PC-9 (cell line): ENCODE measurements at regions of chr17 and their contacts with region 1.

Region 1: DNA sequence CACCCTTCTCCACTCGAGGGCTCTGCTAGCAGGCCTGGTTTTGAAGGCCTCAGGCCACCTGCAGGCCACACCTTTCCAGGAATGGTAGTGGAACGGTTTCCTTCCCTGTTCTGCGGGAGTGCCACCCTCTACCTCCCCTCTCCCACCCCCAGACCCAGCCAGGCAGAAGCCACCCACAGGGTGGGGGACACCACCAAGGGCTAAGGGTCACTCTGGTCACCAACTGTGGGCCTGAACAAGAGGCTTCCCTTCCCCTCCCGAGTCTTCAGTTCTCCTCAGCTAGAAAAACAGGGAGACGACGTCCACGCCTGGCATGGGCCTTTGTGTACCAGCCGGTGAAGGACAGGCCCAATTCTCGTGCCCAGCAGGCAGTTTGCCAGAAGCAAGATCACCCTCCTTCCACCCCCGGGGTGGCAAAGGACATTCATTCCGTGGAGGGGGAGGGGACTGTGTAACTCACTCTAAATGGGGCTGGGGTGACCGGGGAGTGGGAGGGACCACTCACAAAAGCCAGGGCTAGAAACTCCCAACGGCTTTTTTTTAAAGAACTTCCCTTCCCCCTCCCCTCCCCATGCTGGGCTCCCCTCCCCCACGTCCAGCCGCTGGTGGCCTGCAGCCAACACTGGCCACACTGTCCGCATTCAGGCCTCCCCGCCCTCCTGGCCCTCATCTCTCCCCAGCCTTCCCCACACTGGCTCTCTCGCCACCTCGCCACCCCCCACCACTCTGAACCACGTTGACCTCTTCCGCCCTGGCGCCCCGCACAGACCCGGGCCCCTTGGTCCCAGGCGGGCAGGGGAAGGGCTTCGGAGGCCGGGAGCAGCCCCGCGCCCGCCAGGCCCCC is 7.7 kb downstream of the CBX4 start:
- DNase-seq: peak in 1 of 2 experiments; percentile 79
- H3K4me3 ChIP-seq: peak overlapping the region; percentile 68
- H3K27ac ChIP-seq: peak overlapping the region; percentile 82
- H3K4me1 ChIP-seq: peaks cover 36% of the 10 kb centered on the region
- H3K27me3 ChIP-seq: no peaks in the 10 kb centered on the region
- CTCF ChIP-seq: no peak

Region 2: DNA sequence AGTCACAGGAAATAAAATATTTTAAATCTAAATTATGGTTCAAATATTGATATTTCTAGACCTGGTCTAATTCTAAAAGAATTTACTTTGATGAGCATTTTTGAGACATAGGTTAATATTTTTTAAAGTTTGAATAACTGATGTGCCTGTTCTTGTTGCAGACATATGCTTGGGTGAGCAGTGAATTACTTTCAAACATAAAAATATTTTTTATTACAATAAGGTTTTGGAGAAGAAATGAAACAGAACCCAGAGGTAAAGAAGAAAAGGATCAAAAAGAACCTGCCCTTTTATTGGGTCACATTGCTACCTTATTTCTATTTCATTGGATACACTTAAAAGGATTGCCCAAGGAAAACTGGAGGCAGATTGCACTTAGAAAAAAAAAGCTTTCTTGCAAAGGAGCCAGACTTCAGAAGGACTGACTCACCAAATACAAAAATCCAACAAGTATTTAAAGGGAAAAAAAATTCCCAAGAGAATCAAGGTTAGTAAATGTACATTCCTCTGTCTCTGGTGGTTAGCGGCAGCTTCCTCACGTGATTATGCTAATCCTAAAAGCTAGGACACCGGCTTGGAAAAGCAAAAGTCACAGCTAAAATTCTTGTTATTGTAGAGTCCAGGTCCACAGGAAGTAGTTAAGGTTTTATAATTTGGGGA is 82.3 kb before region 1 on chr17:
- CTCF ChIA-PET with region 1: no interaction called
- POLR2A ChIA-PET with region 1: no interaction called
- intact Hi-C with region 1: no loop called
- DNase-seq: no peak
- H3K4me3 ChIP-seq: no peak overlapping the region
- H3K27ac ChIP-seq: peak overlapping the region; percentile 18; the same call in 1 of the 2 replicates
- H3K4me1 ChIP-seq: peaks cover 32% of the 10 kb centered on the region
- H3K27me3 ChIP-seq: no peaks in the 10 kb centered on the region
- CTCF ChIP-seq: no peak

Region 3: GRCh38 chr17:79810130-79811010 is 21.2 kb before region 1 on chr17:
- CTCF ChIA-PET with region 1: interaction called, 5 read pairs
- POLR2A ChIA-PET with region 1: interaction called, 22 read pairs
- intact Hi-C with region 1: loop called (anchors 1 kb)
- DNase-seq: peak; percentile 68 to 76
- H3K4me3 ChIP-seq: peak overlapping the region; percentile 54; the same call in 1 of the 2 replicates
- H3K27ac ChIP-seq: no peak overlapping the region
- H3K4me1 ChIP-seq: peaks cover 39% of the 10 kb centered on the region; the same call in 1 of the 2 replicates
- H3K27me3 ChIP-seq: peaks cover 3% of the 10 kb centered on the region; the same call in 1 of the 2 replicates
- CTCF ChIP-seq: no peak